ENCODE measurements at regions of chr2 and their contacts with region 1.

Region 1: GRCh38 chr2:9770308-9771100 is 72.8 kb upstream of the TAF1B start:
- DNase-seq: peak; percentile 77
- ATAC-seq: peak; percentile 67
- H3K4me3 Mint-ChIP-seq: no peak overlapping the region
- H3K27ac Mint-ChIP-seq: no peak overlapping the region
- H3K4me1 Mint-ChIP-seq: peaks cover 45% of the 10 kb centered on the region
- H3K27me3 Mint-ChIP-seq: no peaks in the 10 kb centered on the region; the same call in 1 of the 2 replicates
- CTCF ChIP-seq: peak; percentile 31; the same call in 1 of the 2 replicates

Region 2: GRCh38 chr2:9555297-9556141 is 215.0 kb before region 1 on chr2 and contains the start of gene ADAM17:
- CTCF ChIA-PET with region 1: interaction called, 33 read pairs
- POLR2A ChIA-PET with region 1: no interaction called
- DNase-seq: peak; percentile 92
- ATAC-seq: peak; percentile 94
- H3K4me3 Mint-ChIP-seq: peak within 1 kb of the TSS; percentile 96
- H3K27ac Mint-ChIP-seq: peak within 1 kb of the TSS; percentile 97
- H3K4me1 Mint-ChIP-seq: peaks cover 30% of the 10 kb centered on the region
- H3K27me3 Mint-ChIP-seq: no peaks in the 10 kb centered on the region
- CTCF ChIP-seq: no peak
- total RNA-seq, gene ADAM17: 23.5 to 25.9 TPM (median 25.5 TPM) in 3 replicates

Region 3: DNA sequence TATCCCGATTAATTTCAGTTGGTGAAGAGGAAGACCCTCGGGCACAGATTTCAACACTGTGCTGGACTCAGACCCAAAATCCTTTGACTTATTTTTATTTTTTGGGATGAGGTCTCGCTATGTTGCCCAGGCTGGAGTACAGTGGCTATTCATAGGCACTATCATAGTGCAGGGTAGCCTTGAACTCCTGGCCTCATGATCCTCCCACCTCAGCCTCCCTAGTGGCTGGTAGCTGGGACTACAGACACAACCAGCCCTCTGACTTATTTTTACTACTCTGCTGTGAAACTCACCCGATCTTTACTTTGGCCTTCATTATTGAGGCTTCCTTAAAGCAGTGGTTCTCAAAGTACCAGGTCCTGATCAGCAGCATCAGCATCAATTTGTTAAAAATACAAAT is 196.7 kb before region 1 on chr2:
- CTCF ChIA-PET with region 1: no interaction called
- POLR2A ChIA-PET with region 1: no interaction called
- DNase-seq: no peak
- ATAC-seq: peak; percentile 76
- H3K4me3 Mint-ChIP-seq: no peak overlapping the region
- H3K27ac Mint-ChIP-seq: no peak overlapping the region
- H3K4me1 Mint-ChIP-seq: no peaks in the 10 kb centered on the region
- H3K27me3 Mint-ChIP-seq: no peaks in the 10 kb centered on the region
- CTCF ChIP-seq: no peak

Region 4: GRCh38 chr2:9757501-9758264 is 12.8 kb before region 1 on chr2:
- CTCF ChIA-PET with region 1: interaction called, 82 read pairs
- POLR2A ChIA-PET with region 1: no interaction called
- DNase-seq: peak; percentile 66
- ATAC-seq: peak; percentile 73
- H3K4me3 Mint-ChIP-seq: peak overlapping the region; percentile 56
- H3K27ac Mint-ChIP-seq: no peak overlapping the region
- H3K4me1 Mint-ChIP-seq: peaks cover 34% of the 10 kb centered on the region
- H3K27me3 Mint-ChIP-seq: peaks cover 5% of the 10 kb centered on the region; the same call in 1 of the 2 replicates
- CTCF ChIP-seq: no peak

Region 5: DNA sequence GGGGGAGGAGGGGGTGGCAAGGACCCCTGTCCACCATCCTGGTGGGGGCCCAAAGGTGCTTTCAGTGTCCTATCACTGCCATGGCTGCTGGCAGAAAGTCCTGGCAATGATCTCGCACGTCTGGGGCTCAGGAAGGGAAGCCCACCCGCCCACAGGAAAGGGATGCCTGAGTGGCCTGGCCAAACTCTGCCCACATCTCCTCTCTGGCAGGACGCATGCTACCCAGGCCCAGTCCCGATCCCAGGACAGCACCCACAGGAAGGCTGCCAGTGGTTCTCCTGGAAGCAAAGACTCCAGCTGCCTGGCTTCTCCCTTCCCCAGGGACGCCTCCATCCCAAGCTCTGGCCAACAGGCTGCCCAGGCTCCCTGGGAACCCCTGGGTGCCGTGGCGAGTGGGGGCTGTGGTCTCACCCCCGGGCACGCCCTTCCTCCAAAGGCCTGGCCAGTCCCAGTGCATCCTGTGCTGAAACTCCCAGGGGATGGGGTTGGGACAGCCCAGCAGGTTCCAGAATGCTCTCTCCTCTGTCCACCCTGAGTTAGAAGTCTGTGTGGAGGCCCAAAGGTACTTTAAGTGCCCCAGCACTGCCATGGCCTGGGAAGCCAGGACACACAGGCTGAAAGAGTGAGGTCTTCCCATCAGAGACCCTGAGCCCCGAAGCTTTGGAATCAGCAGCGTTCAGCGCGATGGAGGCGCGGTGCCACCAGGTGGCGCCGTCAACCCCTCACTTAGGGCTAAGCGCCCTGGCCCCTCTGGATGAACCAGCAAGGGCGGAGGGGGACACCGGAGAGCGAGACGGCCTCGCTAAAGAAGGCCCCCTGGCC is 43.0 kb after region 1 on chr2:
- CTCF ChIA-PET with region 1: interaction called, 12 read pairs
- POLR2A ChIA-PET with region 1: no interaction called
- DNase-seq: peak; percentile 94
- ATAC-seq: peak; percentile 95
- H3K4me3 Mint-ChIP-seq: peak overlapping the region; percentile 31; the same call in 1 of the 2 replicates
- H3K27ac Mint-ChIP-seq: no peak overlapping the region
- H3K4me1 Mint-ChIP-seq: peaks cover 6% of the 10 kb centered on the region
- H3K27me3 Mint-ChIP-seq: 0 out of 2 replicates have a peak, but pooled peaks cover 4% of the 10 kb centered on the region
- CTCF ChIP-seq: peak; percentile 79

Region 6: GRCh38 chr2:10057231-10058107 is 287.0 kb after region 1 on chr2:
- CTCF ChIA-PET with region 1: interaction called, 17 read pairs
- POLR2A ChIA-PET with region 1: no interaction called
- DNase-seq: peak; percentile 92
- ATAC-seq: peak; percentile 94
- H3K4me3 Mint-ChIP-seq: peak overlapping the region; percentile 85
- H3K27ac Mint-ChIP-seq: peak overlapping the region; percentile 98
- H3K4me1 Mint-ChIP-seq: peaks cover 28% of the 10 kb centered on the region
- H3K27me3 Mint-ChIP-seq: no peaks in the 10 kb centered on the region
- CTCF ChIP-seq: no peak